Activated CD4-positive, alpha-beta memory T cell treated with anti-CD3 and anti-CD28 coated beads for 36 hours (primary cell): ENCODE measurements at regions of chrX and their contacts with region 1.

Region 1: GRCh38 chrX:70454441-70455365 is 10.1 kb downstream of the DLG3 start:
- DNase-seq: peak; percentile 80
- H3K4me3 Mint-ChIP-seq: peak overlapping the region; percentile 76
- H3K27ac Mint-ChIP-seq: peak overlapping the region; percentile 83
- H3K4me1 Mint-ChIP-seq: peaks cover 30% of the 10 kb centered on the region
- H3K27me3 Mint-ChIP-seq: no peaks in the 10 kb centered on the region

Region 2: DNA sequence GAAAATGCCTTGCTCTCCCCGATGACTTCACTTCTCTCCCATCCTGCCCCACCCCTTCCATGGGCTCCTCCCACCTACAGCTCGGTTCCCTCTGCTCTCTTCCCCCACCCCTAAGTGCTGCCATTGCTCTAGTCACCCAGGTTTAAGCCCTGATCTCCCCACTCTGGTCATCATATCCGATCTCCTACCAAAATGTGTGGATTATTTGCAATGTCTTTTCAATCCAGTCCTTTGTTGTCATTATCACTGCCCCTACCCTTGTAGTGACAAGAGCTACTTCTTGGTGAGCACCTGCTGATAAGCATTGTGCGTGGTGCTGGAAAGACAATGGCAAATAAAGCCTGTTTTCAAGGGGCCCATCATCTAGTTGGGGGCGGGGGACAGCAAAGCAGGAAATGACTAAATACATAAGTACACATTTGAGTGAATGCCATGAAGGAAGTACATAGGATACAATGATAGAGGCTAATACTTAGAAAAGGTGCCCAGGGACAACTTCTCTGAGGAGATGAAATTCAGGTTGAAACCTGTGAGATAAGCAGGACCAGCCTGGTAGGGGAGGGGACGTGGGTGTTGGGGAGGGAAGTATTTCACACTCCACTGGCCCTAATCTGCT is 53.7 kb after region 1 on chrX:
- CTCF ChIA-PET with region 1: interaction called, 4 read pairs
- POLR2A ChIA-PET with region 1: interaction called, 4 read pairs
- intact Hi-C with region 1: loop called (anchors 1 kb)
- DNase-seq: peak; percentile 51
- H3K4me3 Mint-ChIP-seq: no peak overlapping the region
- H3K27ac Mint-ChIP-seq: peak overlapping the region; percentile 44
- H3K4me1 Mint-ChIP-seq: peaks cover 37% of the 10 kb centered on the region
- H3K27me3 Mint-ChIP-seq: peaks cover 3% of the 10 kb centered on the region

Region 3: DNA sequence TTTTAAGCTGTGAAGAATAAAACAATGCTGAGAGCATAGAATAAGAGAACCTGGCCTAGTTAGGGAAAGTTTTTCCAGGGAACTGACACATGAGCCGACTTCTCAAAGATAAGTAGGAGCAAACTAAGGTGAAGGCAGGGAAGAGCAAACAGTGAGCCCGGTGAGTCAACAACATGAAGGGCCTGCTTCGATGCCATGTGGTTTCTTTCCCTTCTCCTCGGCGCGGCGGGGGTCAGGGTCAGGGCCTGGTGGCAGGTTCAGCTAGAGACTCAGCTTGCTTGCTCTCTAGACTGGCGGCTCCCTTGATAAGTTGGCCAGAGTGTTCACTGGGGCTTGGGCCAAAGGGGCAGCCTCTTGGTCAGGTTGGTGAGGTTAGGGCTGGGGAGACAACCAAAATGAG is 71.0 kb after region 1 on chrX:
- CTCF ChIA-PET with region 1: no interaction called
- POLR2A ChIA-PET with region 1: no interaction called
- intact Hi-C with region 1: no loop called
- DNase-seq: no peak
- H3K4me3 Mint-ChIP-seq: no peak overlapping the region
- H3K27ac Mint-ChIP-seq: no peak overlapping the region
- H3K4me1 Mint-ChIP-seq: peaks cover 3% of the 10 kb centered on the region
- H3K27me3 Mint-ChIP-seq: no peaks in the 10 kb centered on the region

Region 4: GRCh38 chrX:70592091-70592490 is 137.4 kb after region 1 on chrX:
- CTCF ChIA-PET with region 1: interaction called, 4 read pairs
- POLR2A ChIA-PET with region 1: interaction called, 3 read pairs
- intact Hi-C with region 1: loop called (anchors 1 kb)
- DNase-seq: peak; percentile 59
- H3K4me3 Mint-ChIP-seq: no peak overlapping the region
- H3K27ac Mint-ChIP-seq: no peak overlapping the region
- H3K4me1 Mint-ChIP-seq: peaks cover 8% of the 10 kb centered on the region
- H3K27me3 Mint-ChIP-seq: no peaks in the 10 kb centered on the region

Region 5: GRCh38 chrX:70755850-70756249 is 301.1 kb after region 1 on chrX:
- CTCF ChIA-PET with region 1: no interaction called
- POLR2A ChIA-PET with region 1: no interaction called
- intact Hi-C with region 1: loop called (anchors 2 kb)
- DNase-seq: peak; percentile 83
- H3K4me3 Mint-ChIP-seq: peak overlapping the region; percentile 20
- H3K27ac Mint-ChIP-seq: no peak overlapping the region
- H3K4me1 Mint-ChIP-seq: peaks cover 22% of the 10 kb centered on the region
- H3K27me3 Mint-ChIP-seq: no peaks in the 10 kb centered on the region